Activated naive CD4-positive, alpha-beta T cell treated with anti-CD3 and anti-CD28 coated beads for 36 hours (primary cell): ENCODE measurements at regions of chr4 and their contacts with region 1.

Region 1: GRCh38 chr4:100093091-100093866 is 97.0 kb downstream of the DDIT4L start:
- DNase-seq: peak; percentile 97
- H3K4me3 Mint-ChIP-seq: no peak overlapping the region
- H3K27ac Mint-ChIP-seq: peak overlapping the region; percentile 73
- H3K4me1 Mint-ChIP-seq: peaks cover 62% of the 10 kb centered on the region
- H3K27me3 Mint-ChIP-seq: peaks cover 2% of the 10 kb centered on the region

Region 2: DNA sequence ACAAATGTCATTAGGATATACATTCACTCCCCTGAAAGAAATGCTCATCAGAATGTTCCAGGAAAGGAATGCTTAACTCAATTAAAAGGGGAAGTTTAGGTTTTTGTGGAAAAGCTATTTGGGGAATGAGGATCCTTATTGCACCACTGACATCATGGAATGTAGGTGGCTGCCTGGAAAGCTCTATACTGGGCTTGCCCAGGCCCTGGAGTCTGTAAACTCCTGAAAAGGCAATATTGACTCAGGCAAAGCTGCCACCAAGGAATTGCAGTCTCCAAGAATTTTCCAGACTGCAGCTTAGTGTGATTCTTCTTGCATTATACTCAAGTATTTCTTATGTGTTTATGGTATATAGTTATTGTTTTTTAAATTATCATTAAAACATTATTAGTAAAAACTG is 260.9 kb before region 1 on chr4:
- CTCF ChIA-PET with region 1: no interaction called
- intact Hi-C with region 1: no loop called
- DNase-seq: no peak
- H3K4me3 Mint-ChIP-seq: no peak overlapping the region
- H3K27ac Mint-ChIP-seq: no peak overlapping the region
- H3K4me1 Mint-ChIP-seq: peaks cover 19% of the 10 kb centered on the region
- H3K27me3 Mint-ChIP-seq: no peaks in the 10 kb centered on the region

Region 3: GRCh38 chr4:100017637-100018310 is 75.5 kb before region 1 on chr4:
- CTCF ChIA-PET with region 1: interaction called, 6 read pairs
- intact Hi-C with region 1: loop called (anchors 1 kb)
- DNase-seq: peak; percentile 22
- H3K4me3 Mint-ChIP-seq: no peak overlapping the region
- H3K27ac Mint-ChIP-seq: peak overlapping the region; percentile 11
- H3K4me1 Mint-ChIP-seq: peaks cover 10% of the 10 kb centered on the region
- H3K27me3 Mint-ChIP-seq: peaks cover 3% of the 10 kb centered on the region

Region 4: DNA sequence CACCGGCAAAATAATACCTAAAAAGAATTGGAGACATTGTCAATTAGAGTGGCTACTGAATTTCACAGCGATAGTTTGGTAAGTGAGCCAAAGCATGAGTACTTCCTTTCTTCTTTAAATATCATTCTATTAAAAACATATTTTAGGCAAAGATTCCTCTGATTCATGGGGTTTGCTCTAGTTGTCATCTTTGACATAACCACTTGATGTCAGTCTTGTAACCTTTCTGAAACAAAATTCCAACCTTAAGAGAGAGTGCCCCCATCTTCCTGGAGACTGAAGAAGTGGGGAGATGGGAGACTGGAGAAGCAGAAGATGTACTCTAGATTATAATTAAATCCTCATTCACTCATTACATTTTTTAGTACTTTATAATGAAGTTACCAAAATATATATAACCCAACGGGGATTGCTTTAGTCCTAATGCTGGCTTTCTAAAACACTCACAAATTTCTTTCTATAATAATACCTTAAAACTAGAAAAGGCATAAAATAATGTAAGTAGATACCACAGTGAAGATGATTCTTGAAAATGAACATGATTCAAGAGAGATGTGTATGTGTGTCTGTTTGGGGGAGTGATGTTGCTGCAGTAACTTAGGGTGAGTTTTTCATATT is 328.2 kb after region 1 on chr4:
- CTCF ChIA-PET with region 1: no interaction called
- intact Hi-C with region 1: loop called (anchors 2 kb)
- DNase-seq: no peak
- H3K4me3 Mint-ChIP-seq: no peak overlapping the region
- H3K27ac Mint-ChIP-seq: no peak overlapping the region
- H3K4me1 Mint-ChIP-seq: peaks cover 2% of the 10 kb centered on the region
- H3K27me3 Mint-ChIP-seq: no peaks in the 10 kb centered on the region

Region 5: DNA sequence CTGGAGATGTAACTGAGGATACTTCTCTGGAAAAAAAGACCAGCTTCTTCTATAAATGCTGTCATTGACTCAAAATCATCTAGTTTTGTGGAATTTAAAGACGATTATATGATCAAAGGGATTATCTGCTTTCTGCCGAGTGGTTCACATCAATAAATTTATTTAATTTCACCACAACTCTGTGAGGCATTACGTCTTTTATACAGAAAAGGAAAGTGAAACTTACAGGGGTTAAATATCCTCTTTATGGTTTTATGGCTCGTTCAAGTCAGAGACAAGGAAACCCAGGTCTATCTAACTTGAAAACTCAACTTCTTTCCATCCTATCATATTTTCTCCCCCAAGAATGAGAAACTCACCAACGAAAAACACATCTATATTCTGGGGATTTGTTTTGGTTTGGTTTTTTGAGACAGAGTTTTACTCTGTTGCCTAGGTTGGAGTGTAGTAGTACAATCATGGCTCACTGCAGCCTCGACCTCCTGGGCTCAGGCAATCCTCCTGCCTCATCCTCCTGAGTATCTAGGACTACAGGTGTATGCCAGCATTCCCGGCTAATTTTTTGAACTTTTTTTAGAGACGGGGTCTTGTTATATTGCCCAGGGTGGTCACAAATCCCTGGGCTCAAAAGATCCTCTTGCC is 802.4 kb after region 1 on chr4:
- CTCF ChIA-PET with region 1: no interaction called
- intact Hi-C with region 1: loop called (anchors 10 kb)
- DNase-seq: no peak
- H3K4me3 Mint-ChIP-seq: peak overlapping the region; percentile 60
- H3K27ac Mint-ChIP-seq: no peak overlapping the region
- H3K4me1 Mint-ChIP-seq: peaks cover 14% of the 10 kb centered on the region
- H3K27me3 Mint-ChIP-seq: peaks cover 2% of the 10 kb centered on the region

Region 6: GRCh38 chr4:101419324-101420135 is 1326.3 kb after region 1 on chr4:
- CTCF ChIA-PET with region 1: no interaction called
- intact Hi-C with region 1: loop called (anchors 5 kb)
- DNase-seq: no peak
- H3K4me3 Mint-ChIP-seq: no peak overlapping the region
- H3K27ac Mint-ChIP-seq: no peak overlapping the region
- H3K4me1 Mint-ChIP-seq: peaks cover 36% of the 10 kb centered on the region
- H3K27me3 Mint-ChIP-seq: peaks cover 43% of the 10 kb centered on the region

Region 7: GRCh38 chr4:101730291-101731117 is 1637.2 kb after region 1 on chr4:
- CTCF ChIA-PET with region 1: interaction called, 3 read pairs
- intact Hi-C with region 1: loop called (anchors 1 kb)
- DNase-seq: peak; percentile 76
- H3K4me3 Mint-ChIP-seq: no peak overlapping the region
- H3K27ac Mint-ChIP-seq: no peak overlapping the region
- H3K4me1 Mint-ChIP-seq: no peaks in the 10 kb centered on the region
- H3K27me3 Mint-ChIP-seq: no peaks in the 10 kb centered on the region